A549 (cell line): ENCODE measurements at regions of chr17 and their contacts with region 1.

Region 1: DNA sequence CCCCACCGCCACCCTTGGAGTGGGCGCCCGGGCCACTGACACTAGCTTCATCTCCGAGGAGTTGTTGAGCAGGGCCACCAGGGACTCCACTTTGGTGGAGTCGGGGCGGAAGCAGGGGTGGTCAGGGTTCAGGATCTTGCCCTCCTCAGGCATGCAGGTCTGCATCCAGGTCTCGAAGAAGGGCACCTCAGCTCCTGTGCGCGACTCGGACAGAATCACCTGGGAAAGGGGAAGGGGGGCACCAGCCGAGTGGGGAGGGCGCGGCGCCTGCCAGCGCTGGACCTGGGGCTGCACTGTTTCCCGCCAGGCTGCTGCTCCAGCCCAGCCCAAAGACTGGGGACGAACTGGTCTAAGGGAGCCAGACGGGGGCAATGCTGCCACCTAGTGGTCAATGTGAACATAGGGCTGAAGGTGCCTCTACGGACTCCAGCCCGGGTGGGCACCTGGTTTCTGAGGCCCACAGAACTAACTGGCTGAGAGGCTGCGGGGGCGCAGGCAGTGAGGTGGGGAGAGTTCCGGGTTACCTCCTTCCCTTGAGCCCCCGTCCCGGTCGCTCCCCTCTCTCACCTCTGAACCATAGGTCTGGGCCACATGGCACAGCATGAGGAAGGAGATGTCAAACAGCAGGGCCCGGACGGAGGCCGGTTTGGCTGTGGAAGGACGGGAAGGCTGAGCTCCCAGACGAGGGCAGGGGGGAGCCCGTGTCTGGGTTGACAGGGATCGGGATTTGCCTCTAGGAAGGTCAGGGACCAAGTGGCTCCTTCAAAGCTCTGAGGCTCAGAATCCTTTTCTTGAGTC is 11.8 kb downstream of the CSF3 start:
- DNase-seq: peak; percentile 83 to 93
- ATAC-seq: peak; percentile 84 to 97
- H3K4me3 ChIP-seq: no peak overlapping the region
- H3K27ac ChIP-seq: peak overlapping the region; percentile 30 to 56; a peak in 4 of 6 replicates
- H3K4me1 ChIP-seq: peaks cover 23% of the 10 kb centered on the region
- CTCF ChIP-seq: peak; percentile 96
- EP300 ChIP-seq: no peak
- POLR2A ChIP-seq: no peak
- RAD21 ChIP-seq: peak; percentile 77 to 79

Region 2: DNA sequence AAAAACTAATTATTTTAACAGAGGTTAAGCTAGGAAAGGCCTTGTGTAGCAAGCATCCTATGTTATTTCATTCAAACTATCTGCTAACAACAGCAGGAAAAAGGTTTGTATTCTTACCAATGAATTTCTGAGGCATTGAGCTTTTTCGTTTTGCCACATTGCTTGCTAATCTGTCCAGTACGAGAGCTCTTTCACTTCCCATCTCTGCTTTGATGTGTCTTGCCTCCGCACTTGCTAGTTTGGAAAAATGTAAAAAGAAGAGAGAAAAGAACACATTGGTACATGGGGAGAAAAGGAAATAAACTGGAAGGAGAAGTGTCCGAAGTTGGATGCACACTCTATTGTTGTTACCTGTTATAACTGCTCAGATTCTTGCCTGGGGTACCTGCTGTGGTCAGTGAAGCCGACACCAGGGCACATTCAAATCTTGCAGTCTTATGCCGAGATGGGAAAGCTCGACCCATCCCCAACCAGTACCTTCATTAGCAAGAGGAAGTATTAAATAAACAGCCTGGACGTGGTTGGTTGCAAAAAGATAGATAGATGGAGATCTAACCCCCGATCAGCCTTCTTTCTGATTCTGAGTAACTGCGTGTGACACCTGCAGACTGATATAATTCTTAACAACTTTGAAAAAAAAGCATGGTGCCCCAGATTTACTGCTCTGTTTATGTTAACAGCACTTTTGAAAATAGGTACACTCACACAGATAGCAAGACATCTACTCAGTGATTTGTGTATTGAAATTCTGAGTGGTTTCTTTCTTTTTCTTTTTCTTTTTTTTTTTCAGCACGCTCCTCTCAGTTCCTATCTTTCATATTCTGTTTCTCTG is 249.3 kb before region 1 on chr17:
- CTCF ChIA-PET with region 1: no interaction called
- POLR2A ChIA-PET with region 1: no interaction called
- DNase-seq: no peak
- ATAC-seq: no peak
- H3K4me3 ChIP-seq: no peak overlapping the region
- H3K27ac ChIP-seq: no peak overlapping the region
- H3K4me1 ChIP-seq: no peaks in the 10 kb centered on the region
- CTCF ChIP-seq: no peak
- EP300 ChIP-seq: no peak
- POLR2A ChIP-seq: no peak
- RAD21 ChIP-seq: no peak

Region 3: GRCh38 chr17:40038882-40039513 is 12.0 kb after region 1 on chr17:
- CTCF ChIA-PET with region 1: interaction called, 236 read pairs
- POLR2A ChIA-PET with region 1: no interaction called
- DNase-seq: peak; percentile 56 to 68
- ATAC-seq: peak; percentile 80 to 88
- H3K4me3 ChIP-seq: no peak overlapping the region
- H3K27ac ChIP-seq: peak overlapping the region in 1 of 2 experiments; percentile 25; a peak in 1 of 6 replicates
- H3K4me1 ChIP-seq: 0 out of 3 replicates have a peak, but pooled peaks cover 7% of the 10 kb centered on the region
- CTCF ChIP-seq: peak; percentile 67
- EP300 ChIP-seq: no peak
- POLR2A ChIP-seq: no peak
- RAD21 ChIP-seq: peak; percentile 54 to 63

Region 4: DNA sequence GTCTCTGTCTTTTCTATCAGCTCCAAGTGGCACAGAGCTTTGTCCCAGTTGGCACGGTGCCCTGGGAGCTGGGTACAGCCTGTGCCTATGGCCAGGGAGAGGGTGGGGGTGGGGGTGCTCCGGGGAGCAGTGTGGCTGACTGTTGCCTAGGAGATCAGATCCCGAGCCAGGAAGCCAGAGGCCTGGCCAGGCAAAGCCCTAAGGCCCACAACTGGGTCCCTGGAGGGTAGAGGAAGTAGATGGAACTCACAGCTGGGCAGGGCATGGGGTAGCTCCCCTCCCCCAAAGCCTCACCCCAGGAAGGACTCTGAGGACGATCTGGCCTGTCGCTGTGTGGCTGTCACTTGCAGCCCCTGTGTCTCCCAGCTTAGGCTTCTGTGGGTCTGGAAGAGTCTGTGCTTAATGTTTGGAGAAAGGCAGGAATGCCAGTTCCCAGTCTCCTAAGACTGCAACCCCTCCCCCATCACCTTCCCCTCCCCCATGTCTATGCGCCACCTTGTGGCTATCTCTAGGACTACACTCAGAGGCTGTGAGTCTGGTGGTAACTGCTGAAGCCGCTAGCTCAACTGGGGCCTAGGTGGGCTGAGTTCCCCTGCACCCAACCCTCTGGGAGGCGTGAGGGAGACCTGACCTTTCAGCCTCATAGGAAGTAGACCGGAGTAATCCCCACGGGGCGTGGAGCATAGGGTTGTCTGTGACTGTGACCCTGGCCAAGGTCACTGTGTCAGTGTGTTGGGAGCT is 48.4 kb after region 1 on chr17:
- CTCF ChIA-PET with region 1: interaction called, 140 read pairs
- POLR2A ChIA-PET with region 1: no interaction called
- DNase-seq: peak in 1 of 2 experiments; percentile 75
- ATAC-seq: peak; percentile 6 to 43; a peak in 3 of 6 replicates
- H3K4me3 ChIP-seq: 0 out of 3 replicates have a peak overlapping the region, but pooled peaks have one; percentile 2
- H3K27ac ChIP-seq: peak overlapping the region; percentile 95
- H3K4me1 ChIP-seq: peaks cover 59% of the 10 kb centered on the region
- CTCF ChIP-seq: peak; percentile 97
- EP300 ChIP-seq: no peak
- POLR2A ChIP-seq: no peak
- RAD21 ChIP-seq: peak; percentile 73 to 85

Region 5: DNA sequence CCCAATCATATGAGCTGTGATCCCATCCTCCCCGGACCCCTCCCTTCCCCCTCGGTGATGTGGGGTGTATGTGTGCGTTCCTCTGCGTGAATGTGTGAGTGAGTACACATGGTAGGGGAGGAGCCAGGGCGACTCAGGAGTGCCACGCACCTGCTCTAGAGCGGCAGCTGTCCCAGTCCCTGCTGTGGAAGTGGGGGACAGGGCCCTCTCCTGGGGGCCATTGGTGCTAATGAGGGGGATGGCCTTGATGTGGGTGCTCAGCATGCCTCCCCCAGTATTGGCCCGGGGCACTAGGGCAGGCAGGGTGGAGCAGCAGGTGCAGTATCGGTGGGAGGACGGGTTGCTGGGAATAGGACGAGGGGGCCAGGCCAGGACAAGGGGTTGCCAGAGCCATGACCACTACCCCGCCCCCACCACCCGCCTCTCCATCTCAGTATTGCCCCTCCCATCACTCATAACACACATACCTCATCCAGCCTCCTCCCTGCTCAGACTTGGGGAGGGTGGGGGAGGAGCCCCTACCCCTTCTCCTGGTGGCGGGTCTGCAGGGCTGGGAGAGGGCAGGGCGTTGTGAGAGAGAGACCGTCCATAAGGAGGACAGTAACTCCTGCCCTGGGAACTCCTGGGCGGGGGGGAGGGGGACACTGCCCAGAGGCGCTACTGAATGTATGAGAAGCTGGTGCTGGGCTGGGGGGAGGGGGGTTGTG is 64.8 kb after region 1 on chr17:
- CTCF ChIA-PET with region 1: interaction called, 103 read pairs
- POLR2A ChIA-PET with region 1: no interaction called
- DNase-seq: no peak
- ATAC-seq: 0 out of 6 replicates have a peak, but pooled peaks have one; percentile 2 to 4
- H3K4me3 ChIP-seq: no peak overlapping the region
- H3K27ac ChIP-seq: peak overlapping the region in 1 of 2 experiments; percentile 18; a peak in 3 of 6 replicates
- H3K4me1 ChIP-seq: peaks cover 21% of the 10 kb centered on the region
- CTCF ChIP-seq: no peak
- EP300 ChIP-seq: no peak
- POLR2A ChIP-seq: no peak
- RAD21 ChIP-seq: no peak

Region 6: GRCh38 chr17:40107522-40108174 is 80.6 kb after region 1 on chr17:
- CTCF ChIA-PET with region 1: interaction called, 62 read pairs
- POLR2A ChIA-PET with region 1: interaction called, 9 read pairs
- DNase-seq: no peak
- ATAC-seq: no peak
- H3K4me3 ChIP-seq: no peak overlapping the region
- H3K27ac ChIP-seq: peak overlapping the region; percentile 29 to 70; a peak in 5 of 6 replicates
- H3K4me1 ChIP-seq: peaks cover 65% of the 10 kb centered on the region
- CTCF ChIP-seq: no peak
- EP300 ChIP-seq: no peak
- POLR2A ChIP-seq: no peak
- RAD21 ChIP-seq: no peak

Region 7: GRCh38 chr17:40293363-40293762 is 266.3 kb after region 1 on chr17:
- CTCF ChIA-PET with region 1: interaction called, 12 read pairs
- POLR2A ChIA-PET with region 1: no interaction called
- DNase-seq: no peak
- ATAC-seq: no peak
- H3K4me3 ChIP-seq: no peak overlapping the region
- H3K27ac ChIP-seq: no peak overlapping the region
- H3K4me1 ChIP-seq: peaks cover 16% of the 10 kb centered on the region
- CTCF ChIP-seq: no peak
- EP300 ChIP-seq: no peak
- POLR2A ChIP-seq: no peak
- RAD21 ChIP-seq: no peak